ENCODE measurements at regions of chr11 and their contacts with region 1.

Region 1: DNA sequence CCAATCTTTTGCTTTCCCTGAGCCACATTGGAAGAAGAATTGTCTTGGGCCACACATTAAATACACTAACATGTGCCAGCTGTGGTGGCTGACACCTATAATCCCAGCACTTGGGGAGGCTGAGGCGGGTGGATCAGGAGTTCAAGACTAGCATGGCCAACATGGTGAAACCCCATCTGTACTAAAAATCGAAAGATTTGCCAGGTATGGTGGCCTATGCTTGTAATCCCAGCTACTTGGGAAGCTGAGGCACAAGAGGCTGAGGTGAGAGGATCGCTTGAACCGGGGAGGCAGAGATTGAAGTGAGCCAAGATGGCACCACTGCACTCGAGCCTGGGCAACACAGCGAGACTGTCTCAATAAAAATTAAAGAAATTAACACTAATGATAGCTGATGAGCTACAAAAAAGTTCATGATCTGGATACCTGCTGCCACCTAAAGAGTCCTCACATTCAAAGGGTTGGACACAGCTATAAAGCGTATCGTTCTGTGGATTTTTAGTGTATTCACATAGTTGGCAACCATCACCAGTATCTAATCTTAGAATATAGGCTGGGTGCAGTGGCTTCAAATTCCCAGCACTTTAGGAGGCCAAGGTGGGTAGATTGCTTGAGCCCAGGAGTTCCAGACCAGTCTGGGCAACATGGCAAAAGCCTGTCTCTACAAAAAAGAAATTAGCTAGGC is 3.4 kb upstream of the LDHC start:
- DNase-seq: no peak
- H3K4me3 ChIP-seq: no peak overlapping the region
- H3K27ac ChIP-seq: no peak overlapping the region
- H3K4me1 ChIP-seq: no peaks in the 10 kb centered on the region
- H3K27me3 ChIP-seq: no peaks in the 10 kb centered on the region
- CTCF ChIP-seq: no peak
- POLR2A ChIP-seq: no peak

Region 2: GRCh38 chr11:18526521-18527296 is 118.0 kb after region 1 on chr11 and contains the start of gene TSG101:
- CTCF ChIA-PET with region 1: no interaction called
- POLR2A ChIA-PET with region 1: interaction called, 3 read pairs
- dilution Hi-C with region 1: no loop called
- intact Hi-C with region 1: loop called (anchors 5 kb)
- DNase-seq: peak; percentile 98
- H3K4me3 ChIP-seq: peak within 1 kb of the TSS; percentile 51 to 96 (median 74)
- H3K27ac ChIP-seq: peak within 1 kb of the TSS; percentile 99
- H3K4me1 ChIP-seq: peaks cover 15% of the 10 kb centered on the region
- H3K27me3 ChIP-seq: no peaks in the 10 kb centered on the region
- CTCF ChIP-seq: no peak
- POLR2A ChIP-seq: peak; percentile 96
- total RNA-seq, gene TSG101: 41.3 and 45.5 TPM in 2 replicates

Region 3: DNA sequence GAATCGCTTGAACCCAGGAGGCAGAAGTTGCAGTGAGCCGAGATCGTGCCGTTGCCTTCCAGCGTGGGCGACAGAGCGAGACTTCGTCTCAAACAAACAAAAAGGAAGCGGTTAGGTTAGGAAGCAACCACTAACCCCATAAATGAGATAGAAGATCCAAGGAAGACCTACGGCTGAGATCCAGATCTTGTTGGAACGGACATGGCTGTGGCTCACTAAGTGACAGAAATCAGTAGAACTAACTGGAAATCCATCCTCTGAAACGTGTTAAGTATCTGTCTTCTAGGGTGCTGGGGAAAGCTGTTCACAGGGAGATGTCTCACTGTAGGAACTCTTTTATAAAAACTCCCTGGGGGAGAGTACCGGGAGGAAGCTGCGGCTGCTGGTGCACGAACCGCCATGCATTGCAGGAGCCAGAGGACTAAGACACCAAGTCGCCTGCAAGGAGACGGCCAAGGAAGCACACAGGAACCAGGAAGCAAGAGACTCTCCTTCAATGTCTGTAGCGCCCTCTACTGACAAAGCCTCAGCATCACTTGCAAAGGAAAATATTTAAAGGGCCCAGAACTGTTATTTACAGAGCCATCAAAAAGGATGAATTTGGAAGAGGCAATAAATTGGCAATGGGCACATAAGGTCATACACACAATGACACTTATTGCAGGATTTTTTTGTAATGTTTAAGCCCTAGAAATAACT is 242.3 kb after region 1 on chr11:
- CTCF ChIA-PET with region 1: no interaction called
- POLR2A ChIA-PET with region 1: no interaction called
- dilution Hi-C with region 1: no loop called
- intact Hi-C with region 1: loop called (anchors 5 kb)
- DNase-seq: peak; percentile 58
- H3K4me3 ChIP-seq: no peak overlapping the region
- H3K27ac ChIP-seq: no peak overlapping the region
- H3K4me1 ChIP-seq: no peaks in the 10 kb centered on the region
- H3K27me3 ChIP-seq: no peaks in the 10 kb centered on the region
- CTCF ChIP-seq: peak; percentile 68 to 69
- POLR2A ChIP-seq: no peak

Measured in endothelial cell of umbilical vein (primary cell).